Heart left ventricle (tissue), 16 donors: ENCODE measurements at regions of chr12 and their contacts with region 1.

Region 1: DNA sequence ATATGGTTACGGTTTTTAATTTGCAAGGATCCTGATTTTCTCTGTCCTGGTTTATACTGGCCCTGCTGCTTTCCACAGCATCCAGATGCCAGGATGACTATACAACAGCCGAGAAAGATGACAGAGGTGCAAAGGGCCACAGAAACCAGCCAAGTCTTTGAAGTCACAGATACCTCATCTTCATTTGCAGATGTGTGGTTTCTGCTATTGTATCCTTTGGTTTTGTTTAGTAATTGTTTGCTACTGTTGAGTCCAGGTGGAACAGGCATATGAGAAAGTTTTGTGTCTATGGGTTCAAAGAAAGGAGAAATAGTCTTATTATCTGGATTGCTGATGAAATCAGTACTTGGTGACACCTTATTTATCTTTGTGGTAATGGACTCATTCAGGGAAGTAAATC is 17.3 kb upstream of the KLHL42 start:
- DNase-seq: no peak
- ATAC-seq: no peak
- H3K4me3 ChIP-seq: no peak overlapping the region
- H3K27ac ChIP-seq: no peak overlapping the region
- H3K4me1 ChIP-seq: no peaks in the 10 kb centered on the region
- H3K27me3 ChIP-seq: no peaks in the 10 kb centered on the region
- CTCF ChIP-seq: no peak
- POLR2A ChIP-seq: no peak

Region 2: DNA sequence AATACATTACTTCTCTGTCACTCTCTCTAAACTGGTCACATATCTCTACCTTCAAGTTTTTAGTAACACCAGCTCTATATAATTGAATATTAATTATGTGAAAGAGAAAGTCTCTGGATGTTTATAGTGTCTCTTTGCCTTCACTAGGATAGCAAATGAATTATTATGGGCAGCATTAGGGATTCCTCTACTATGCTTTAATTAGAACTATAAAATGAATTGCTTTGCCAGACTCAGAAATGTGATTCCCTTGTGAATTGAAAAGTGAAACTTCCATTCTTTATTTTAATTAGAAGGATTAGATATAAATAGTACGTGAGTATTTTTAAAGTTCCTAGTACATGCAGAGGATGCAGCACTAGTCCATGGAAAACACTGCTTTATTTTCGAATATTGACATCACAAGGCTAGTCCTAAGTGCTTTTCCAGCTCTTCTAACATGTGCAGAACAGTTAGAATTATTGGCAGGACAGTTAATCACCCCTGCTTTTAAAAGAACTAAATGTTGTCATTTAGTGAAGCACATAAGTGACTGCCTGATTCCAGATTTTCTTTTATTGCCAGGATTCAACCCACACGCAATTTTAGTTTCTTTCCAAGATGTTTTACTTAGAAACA is 89.5 kb before region 1 on chr12:
- intact Hi-C with region 1: no loop called
- DNase-seq: no peak
- ATAC-seq: peak; percentile 83 to 94 (median 88)
- H3K4me3 ChIP-seq: peak overlapping the region in 1 of 12 donors; percentile 14
- H3K27ac ChIP-seq: peak overlapping the region; percentile 22 to 76 (median 58)
- H3K4me1 ChIP-seq: peaks cover 0 to 38% (median 25%) of the 10 kb centered on the region in 12 donors
- H3K27me3 ChIP-seq: no peaks in the 10 kb centered on the region
- CTCF ChIP-seq: no peak
- POLR2A ChIP-seq: no peak

Region 3: GRCh38 chr12:27922501-27923139 is 159.9 kb after region 1 on chr12:
- intact Hi-C with region 1: loop called in 1 of 10 experiments (anchors 10 kb)
- DNase-seq: peak in 3 of 5 donors; percentile 11 to 40 (median 37)
- ATAC-seq: peak; percentile 64 to 86 (median 78)
- H3K4me3 ChIP-seq: no peak overlapping the region
- H3K27ac ChIP-seq: no peak overlapping the region
- H3K4me1 ChIP-seq: peaks cover 0 to 8% (median 0%) of the 10 kb centered on the region in 12 donors
- H3K27me3 ChIP-seq: no peaks in the 10 kb centered on the region
- CTCF ChIP-seq: no peak
- POLR2A ChIP-seq: no peak